ENCODE measurements at regions of chr4 and their contacts with region 1.

Region 1: GRCh38 chr4:52701207-52701606 is 42.1 kb upstream of the USP46 start:
- DNase-seq: no peak
- ATAC-seq: peak; percentile 79
- H3K4me3 Mint-ChIP-seq: no peak overlapping the region
- H3K27ac Mint-ChIP-seq: peak overlapping the region; percentile 63
- H3K4me1 Mint-ChIP-seq: peaks cover 18% of the 10 kb centered on the region
- H3K27me3 Mint-ChIP-seq: peaks cover 2% of the 10 kb centered on the region
- CTCF ChIP-seq: no peak

Region 2: GRCh38 chr4:52659001-52659721 is 42.0 kb before region 1 on chr4 and contains the start of gene USP46:
- CTCF ChIA-PET with region 1: no interaction called
- POLR2A ChIA-PET with region 1: interaction called, 7 read pairs
- intact Hi-C with region 1: loop called (anchors 2 kb)
- DNase-seq: peak; percentile 62
- ATAC-seq: peak; percentile 87
- H3K4me3 Mint-ChIP-seq: peak within 1 kb of the TSS; percentile 88
- H3K27ac Mint-ChIP-seq: peak within 1 kb of the TSS; percentile 76
- H3K4me1 Mint-ChIP-seq: peaks cover 19% of the 10 kb centered on the region
- H3K27me3 Mint-ChIP-seq: no peaks in the 10 kb centered on the region
- CTCF ChIP-seq: no peak
- total RNA-seq, gene USP46: 12.6 and 13.3 TPM in 2 replicates

Region 3: GRCh38 chr4:53702334-53703266 is 1001.4 kb after region 1 on chr4:
- CTCF ChIA-PET with region 1: no interaction called
- POLR2A ChIA-PET with region 1: no interaction called
- intact Hi-C with region 1: no loop called
- DNase-seq: peak; percentile 25
- ATAC-seq: peak; percentile 64
- H3K4me3 Mint-ChIP-seq: peak overlapping the region; percentile 79
- H3K27ac Mint-ChIP-seq: peak overlapping the region; percentile 54
- H3K4me1 Mint-ChIP-seq: peaks cover 61% of the 10 kb centered on the region
- H3K27me3 Mint-ChIP-seq: no peaks in the 10 kb centered on the region
- CTCF ChIP-seq: no peak